RWPE1 (cell line): ENCODE measurements at regions of chr7 and their contacts with region 1.

Region 1: GRCh38 chr7:86469680-86470295 is 173.9 kb upstream of the GRM3 start:
- DNase-seq: peak; percentile 40
- H3K27ac ChIP-seq: no peak overlapping the region
- CTCF ChIP-seq: peak; percentile 84

Region 2: DNA sequence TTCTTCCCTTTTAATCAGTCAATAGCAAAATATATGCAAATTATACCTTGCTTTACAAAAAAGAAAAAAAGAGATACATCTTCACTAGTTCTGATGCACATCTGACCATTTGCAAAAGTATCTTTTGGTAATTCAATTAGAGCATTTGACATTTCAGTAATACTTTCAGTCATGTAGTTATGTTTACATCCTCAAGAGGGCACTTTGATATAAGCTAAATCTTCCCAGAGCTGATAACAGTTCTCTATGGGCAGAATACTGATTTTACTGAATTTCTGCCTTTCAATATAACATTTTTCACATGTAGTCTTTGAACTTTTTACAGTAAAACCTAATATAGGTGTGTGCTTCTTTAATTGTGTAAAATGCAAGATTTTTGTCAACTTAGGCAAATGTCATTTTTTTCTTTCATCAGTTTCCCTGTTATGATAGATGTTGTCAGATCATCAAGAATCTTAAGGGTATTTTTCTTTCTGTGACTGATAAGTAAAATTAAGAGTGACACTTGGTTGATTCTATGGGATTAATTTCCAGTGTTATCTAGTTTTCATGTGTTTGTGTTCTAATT is 579.5 kb before region 1 on chr7:
- CTCF ChIA-PET with region 1: interaction called, 12 read pairs
- POLR2A ChIA-PET with region 1: no interaction called
- DNase-seq: peak; percentile 25
- H3K27ac ChIP-seq: no peak overlapping the region
- CTCF ChIP-seq: peak; percentile 78